ENCODE measurements at regions of chr14 and their contacts with region 1.

Region 1: DNA sequence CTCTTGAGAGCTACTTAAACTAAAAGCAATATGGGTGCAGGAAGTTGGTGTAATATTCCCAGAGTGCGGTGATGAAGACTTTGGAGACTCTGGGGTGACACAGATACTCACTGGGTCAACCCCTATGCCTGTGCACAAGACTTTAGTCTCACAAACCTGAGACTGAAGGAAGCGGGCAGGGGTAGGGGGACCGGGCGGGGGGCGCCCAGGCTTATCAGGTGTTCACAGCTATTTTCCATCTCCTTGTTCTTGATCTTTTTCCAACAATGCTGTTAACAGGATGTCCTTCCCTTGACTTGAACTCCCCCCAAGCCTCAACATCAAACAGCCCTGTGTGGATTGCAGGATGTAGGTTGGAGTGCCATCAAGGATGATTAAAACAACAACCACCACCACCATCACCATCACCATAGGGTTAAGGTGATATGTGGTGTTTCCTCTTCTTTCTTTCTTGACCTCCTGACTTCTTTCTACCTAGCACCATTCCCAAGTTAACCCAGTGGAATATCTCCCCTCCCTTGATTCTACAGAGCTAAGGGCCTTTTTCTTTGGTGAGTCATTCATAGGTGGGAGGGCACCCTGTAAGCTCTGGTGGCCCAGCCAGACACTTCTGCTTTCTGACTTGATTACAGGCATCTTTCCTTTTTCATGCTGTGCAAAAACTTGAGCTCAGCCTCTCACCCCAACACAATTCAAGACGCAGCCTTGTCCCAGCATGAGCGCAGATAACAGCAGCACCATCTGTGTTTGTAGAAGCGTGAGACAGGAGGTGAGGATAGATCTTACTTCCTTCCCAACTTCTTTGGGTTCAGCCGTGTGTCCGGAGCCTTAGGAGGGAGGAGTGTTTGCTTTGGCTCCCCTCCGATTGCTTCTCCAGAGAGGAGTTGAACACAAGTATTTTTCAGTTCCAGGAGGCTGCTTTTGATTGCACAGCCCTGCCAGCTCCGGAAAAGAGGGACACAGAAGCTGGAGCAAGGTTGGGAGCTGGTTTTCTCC is 26.7 kb downstream of the FLVCR2 start:
- DNase-seq: peak in 4 of 5 donors; percentile 45 to 55 (median 52)
- ATAC-seq: peak; percentile 38 to 79 (median 65)
- H3K4me3 ChIP-seq: peak overlapping the region in 6 of 12 donors; percentile 13 to 45 (median 27)
- H3K27ac ChIP-seq: peak overlapping the region in 7 of 12 donors; percentile 2 to 76 (median 50)
- H3K4me1 ChIP-seq: peaks cover 0 to 89% (median 14%) of the 10 kb centered on the region in 12 donors
- H3K27me3 ChIP-seq: no peaks in the 10 kb centered on the region
- CTCF ChIP-seq: no peak
- POLR2A ChIP-seq: no peak

Region 2: DNA sequence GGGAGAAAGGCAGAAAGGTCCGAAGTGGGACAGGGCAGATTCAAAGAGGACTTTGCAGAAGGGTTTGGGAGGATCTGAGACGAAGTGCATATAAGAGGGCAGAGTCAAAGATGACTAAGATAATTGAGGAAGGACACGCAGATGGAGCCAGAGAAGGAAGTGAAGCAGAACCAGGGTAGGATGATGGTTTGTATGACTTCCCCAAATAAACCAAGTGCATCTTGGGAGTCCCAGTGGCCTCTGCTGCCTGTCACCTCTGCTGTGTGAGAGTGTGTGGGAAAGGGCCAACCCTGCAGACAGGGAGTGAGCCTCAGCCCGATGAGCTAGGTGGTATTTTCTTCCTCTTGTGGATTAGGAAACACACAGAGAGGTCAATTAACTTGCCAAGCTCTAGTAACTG is 10.0 kb after region 1 on chr14:
- intact Hi-C with region 1: loop called in 1 of 10 experiments (anchors 1 kb)
- DNase-seq: peak in 3 of 5 donors; percentile 26 to 45 (median 35)
- ATAC-seq: peak in 3 of 4 donors; percentile 45 to 77 (median 73)
- H3K4me3 ChIP-seq: no peak overlapping the region
- H3K27ac ChIP-seq: peak overlapping the region in 1 of 12 donors; percentile 91
- H3K4me1 ChIP-seq: peaks cover 0 to 62% (median 11%) of the 10 kb centered on the region in 12 donors
- H3K27me3 ChIP-seq: no peaks in the 10 kb centered on the region
- CTCF ChIP-seq: no peak
- POLR2A ChIP-seq: no peak

Region 3: GRCh38 chr14:75660630-75661494 is 55.7 kb after region 1 on chr14 and contains the starts of genes ERG28 and TTLL5:
- intact Hi-C with region 1: no loop called
- DNase-seq: peak; percentile 96 to 98 (median 97)
- ATAC-seq: peak; percentile 98 to 99 (median 98)
- H3K4me3 ChIP-seq: peak within 1 kb of the TSS; percentile 53 to 98 (median 84)
- H3K27ac ChIP-seq: peak within 1 kb of the TSS in 11 of 12 donors; percentile 75 to 89 (median 83)
- H3K4me1 ChIP-seq: peaks cover 0 to 31% (median 14%) of the 10 kb centered on the region in 12 donors
- H3K27me3 ChIP-seq: no peaks in the 10 kb centered on the region
- CTCF ChIP-seq: no peak
- POLR2A ChIP-seq: peak in 1 of 2 donors; percentile 58
- total RNA-seq, gene ERG28: 5.7 to 9.2 (median 7.4) TPM
- total RNA-seq, gene TTLL5: 13.8 to 24.6 (median 18.2) TPM